PC-3 (cell line): ENCODE measurements at regions of chr12 and their contacts with region 1.

Region 1: GRCh38 chr12:70796989-70797388 is 123.5 kb downstream of the PTPRR start:
- DNase-seq: peak; percentile 78
- ATAC-seq: peak; percentile 86
- H3K4me3 ChIP-seq: no peak overlapping the region
- H3K27ac ChIP-seq: peak overlapping the region; percentile 25
- H3K4me1 ChIP-seq: peaks cover 37% of the 10 kb centered on the region
- H3K27me3 ChIP-seq: no peaks in the 10 kb centered on the region
- CTCF ChIP-seq: no peak

Region 2: GRCh38 chr12:70467908-70468733 is 328.9 kb before region 1 on chr12:
- CTCF ChIA-PET with region 1: no interaction called
- POLR2A ChIA-PET with region 1: no interaction called
- intact Hi-C with region 1: no loop called
- DNase-seq: no peak
- ATAC-seq: no peak
- H3K4me3 ChIP-seq: no peak overlapping the region
- H3K27ac ChIP-seq: no peak overlapping the region
- H3K4me1 ChIP-seq: no peaks in the 10 kb centered on the region
- H3K27me3 ChIP-seq: no peaks in the 10 kb centered on the region
- CTCF ChIP-seq: no peak

Region 3: GRCh38 chr12:70815971-70816391 is 19.0 kb after region 1 on chr12:
- CTCF ChIA-PET with region 1: no interaction called
- POLR2A ChIA-PET with region 1: no interaction called
- intact Hi-C with region 1: loop called (anchors 1 kb)
- DNase-seq: peak; percentile 83
- ATAC-seq: peak; percentile 93
- H3K4me3 ChIP-seq: no peak overlapping the region
- H3K27ac ChIP-seq: peak overlapping the region; percentile 54
- H3K4me1 ChIP-seq: peaks cover 19% of the 10 kb centered on the region
- H3K27me3 ChIP-seq: no peaks in the 10 kb centered on the region
- CTCF ChIP-seq: no peak

Region 4: DNA sequence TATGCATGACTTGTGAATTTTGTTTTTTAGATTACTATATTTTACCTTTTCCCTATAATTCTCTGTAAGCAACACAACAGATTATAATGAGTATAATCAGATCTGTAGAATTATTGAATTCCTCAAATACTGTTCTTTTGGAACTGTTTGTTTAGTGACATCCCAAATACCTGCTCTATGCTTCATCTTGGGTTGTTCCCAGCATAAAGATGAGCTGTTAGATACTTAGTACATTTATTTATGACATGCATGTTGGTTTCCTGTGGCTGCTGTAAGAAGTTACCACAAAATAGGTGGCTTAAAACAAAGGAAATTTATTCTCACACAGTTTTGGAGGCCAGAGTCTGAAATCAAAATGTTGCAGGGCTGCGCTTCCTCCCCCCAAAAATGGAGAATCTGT is 45.1 kb after region 1 on chr12:
- CTCF ChIA-PET with region 1: no interaction called
- POLR2A ChIA-PET with region 1: no interaction called
- intact Hi-C with region 1: loop called (anchors 1 kb)
- DNase-seq: peak; percentile 87
- ATAC-seq: peak; percentile 87
- H3K4me3 ChIP-seq: no peak overlapping the region
- H3K27ac ChIP-seq: peak overlapping the region; percentile 81
- H3K4me1 ChIP-seq: peaks cover 35% of the 10 kb centered on the region
- H3K27me3 ChIP-seq: no peaks in the 10 kb centered on the region
- CTCF ChIP-seq: no peak

Region 5: DNA sequence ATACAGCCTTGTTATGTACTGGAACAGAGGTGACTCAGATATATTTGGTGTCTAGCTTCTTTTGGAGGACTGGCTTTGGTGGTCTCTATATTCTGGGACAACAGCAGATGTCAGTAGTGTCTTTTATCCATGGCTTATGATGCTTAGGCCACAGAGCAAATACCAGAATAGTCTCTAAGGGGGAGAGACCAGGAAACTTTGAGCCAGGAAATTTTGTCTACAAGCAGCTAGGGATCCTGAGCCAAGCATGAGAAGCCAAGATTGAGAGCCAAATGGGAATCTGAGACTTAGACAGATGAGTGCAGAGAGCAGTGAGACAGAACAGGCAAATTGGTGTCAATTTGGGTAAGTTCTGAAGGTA is 152.0 kb after region 1 on chr12:
- CTCF ChIA-PET with region 1: no interaction called
- POLR2A ChIA-PET with region 1: no interaction called
- intact Hi-C with region 1: no loop called
- DNase-seq: no peak
- ATAC-seq: no peak
- H3K4me3 ChIP-seq: no peak overlapping the region
- H3K27ac ChIP-seq: no peak overlapping the region
- H3K4me1 ChIP-seq: no peaks in the 10 kb centered on the region
- H3K27me3 ChIP-seq: peaks cover under 1% of the 10 kb centered on the region; the same call in 1 of the 2 replicates
- CTCF ChIP-seq: no peak